Body of pancreas (tissue), 4 donors: ENCODE measurements at regions of chr19 and their contacts with region 1.

Region 1: GRCh38 chr19:40662921-40663694 is 27.3 kb downstream of the NUMBL start:
- DNase-seq: peak; percentile 90 to 93 (median 92)
- ATAC-seq: peak; percentile 88
- H3K4me3 ChIP-seq: peak overlapping the region; percentile 29 to 33
- H3K27ac ChIP-seq: peak overlapping the region; percentile 55 to 83 (median 74)
- H3K4me1 ChIP-seq: peaks cover 17% of the 10 kb centered on the region
- H3K27me3 ChIP-seq: no peaks in the 10 kb centered on the region
- CTCF ChIP-seq: peak in 6 of 7 experiments; percentile 98 to 99 (median 99)
- POLR2A ChIP-seq: peak in 2 of 3 donors; percentile 23 to 33

Region 2: GRCh38 chr19:40139533-40140287 is 523.4 kb before region 1 on chr19:
- intact Hi-C with region 1: no loop called
- DNase-seq: peak in 2 of 4 donors; percentile 23 to 34
- ATAC-seq: no peak
- H3K4me3 ChIP-seq: no peak overlapping the region
- H3K27ac ChIP-seq: no peak overlapping the region
- H3K4me1 ChIP-seq: no peaks in the 10 kb centered on the region
- H3K27me3 ChIP-seq: no peaks in the 10 kb centered on the region
- CTCF ChIP-seq: peak; percentile 56 to 88 (median 82)
- POLR2A ChIP-seq: no peak

Region 3: DNA sequence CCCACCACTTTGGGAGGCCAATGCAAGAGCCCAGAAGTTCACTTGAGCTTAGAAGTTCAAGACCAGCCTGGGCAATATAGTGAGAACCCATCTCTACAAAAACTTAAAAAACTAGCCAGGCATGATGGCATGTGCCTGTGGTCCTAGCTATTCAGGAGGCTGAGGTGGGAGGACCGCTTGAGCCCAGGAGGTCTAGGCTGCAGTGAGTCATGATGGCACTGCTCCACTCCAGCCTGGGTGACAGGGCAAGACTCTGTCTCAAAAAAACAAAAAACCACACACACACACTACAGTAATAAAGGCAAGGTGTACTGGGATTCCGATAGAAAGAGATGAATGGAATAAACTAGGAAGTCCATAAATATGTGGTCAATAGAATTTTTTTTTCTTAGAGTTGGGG is 486.7 kb after region 1 on chr19:
- intact Hi-C with region 1: loop called (anchors 5 kb)
- DNase-seq: no peak
- ATAC-seq: no peak
- H3K4me3 ChIP-seq: no peak overlapping the region
- H3K27ac ChIP-seq: no peak overlapping the region
- H3K4me1 ChIP-seq: no peaks in the 10 kb centered on the region
- H3K27me3 ChIP-seq: no peaks in the 10 kb centered on the region
- CTCF ChIP-seq: no peak
- POLR2A ChIP-seq: no peak